MCF 10A (cell line): ENCODE measurements at regions of chr17 and their contacts with region 1.

Region 1: GRCh38 chr17:7435221-7435675 is at the start of gene TMEM102:
- DNase-seq: peak; percentile 99
- H3K4me3 Mint-ChIP-seq: peak within 1 kb of the TSS; percentile 81
- H3K27ac Mint-ChIP-seq: peak within 1 kb of the TSS; percentile 92
- H3K4me1 Mint-ChIP-seq: peaks cover 12% of the 10 kb centered on the region
- H3K27me3 Mint-ChIP-seq: no peaks in the 10 kb centered on the region
- CTCF ChIP-seq: no peak
- total RNA-seq, gene TMEM102: 6.1 and 6.3 TPM in 2 replicates

Region 2: GRCh38 chr17:7322520-7323194 is 112.6 kb before region 1 on chr17:
- CTCF ChIA-PET with region 1: no interaction called
- POLR2A ChIA-PET with region 1: no interaction called
- intact Hi-C with region 1: no loop called
- DNase-seq: no peak
- H3K4me3 Mint-ChIP-seq: no peak overlapping the region
- H3K27ac Mint-ChIP-seq: no peak overlapping the region
- H3K4me1 Mint-ChIP-seq: peaks cover 1% of the 10 kb centered on the region
- H3K27me3 Mint-ChIP-seq: no peaks in the 10 kb centered on the region
- CTCF ChIP-seq: no peak

Region 3: GRCh38 chr17:7361906-7362305 is 73.3 kb before region 1 on chr17:
- CTCF ChIA-PET with region 1: interaction called, 57 read pairs
- POLR2A ChIA-PET with region 1: interaction called, 8 read pairs
- intact Hi-C with region 1: no loop called
- DNase-seq: no peak
- H3K4me3 Mint-ChIP-seq: no peak overlapping the region
- H3K27ac Mint-ChIP-seq: no peak overlapping the region
- H3K4me1 Mint-ChIP-seq: peaks cover 7% of the 10 kb centered on the region
- H3K27me3 Mint-ChIP-seq: no peaks in the 10 kb centered on the region
- CTCF ChIP-seq: no peak

Region 4: DNA sequence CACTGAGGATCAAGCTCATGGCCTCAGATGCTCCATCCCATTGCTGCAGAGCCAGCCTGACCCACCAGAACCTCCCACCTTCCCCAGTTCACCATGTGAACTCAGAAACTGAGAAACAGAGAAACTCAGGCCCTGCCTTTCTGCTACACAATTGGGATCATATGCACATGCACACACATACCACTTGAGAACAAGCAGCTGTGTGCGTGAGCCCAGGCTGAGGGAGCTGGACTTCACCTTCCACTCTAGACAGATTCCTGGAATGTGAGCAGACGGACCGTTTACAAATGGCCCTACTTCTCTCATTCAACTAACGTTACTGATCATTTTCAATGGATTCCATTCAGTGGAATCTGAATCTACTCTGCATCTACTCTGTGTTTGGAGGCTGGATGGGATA is 11.6 kb before region 1 on chr17:
- CTCF ChIA-PET with region 1: interaction called, 16 read pairs
- POLR2A ChIA-PET with region 1: interaction called, 6 read pairs
- intact Hi-C with region 1: no loop called
- DNase-seq: no peak
- H3K4me3 Mint-ChIP-seq: no peak overlapping the region
- H3K27ac Mint-ChIP-seq: no peak overlapping the region
- H3K4me1 Mint-ChIP-seq: no peaks in the 10 kb centered on the region
- H3K27me3 Mint-ChIP-seq: no peaks in the 10 kb centered on the region
- CTCF ChIP-seq: no peak

Region 5: DNA sequence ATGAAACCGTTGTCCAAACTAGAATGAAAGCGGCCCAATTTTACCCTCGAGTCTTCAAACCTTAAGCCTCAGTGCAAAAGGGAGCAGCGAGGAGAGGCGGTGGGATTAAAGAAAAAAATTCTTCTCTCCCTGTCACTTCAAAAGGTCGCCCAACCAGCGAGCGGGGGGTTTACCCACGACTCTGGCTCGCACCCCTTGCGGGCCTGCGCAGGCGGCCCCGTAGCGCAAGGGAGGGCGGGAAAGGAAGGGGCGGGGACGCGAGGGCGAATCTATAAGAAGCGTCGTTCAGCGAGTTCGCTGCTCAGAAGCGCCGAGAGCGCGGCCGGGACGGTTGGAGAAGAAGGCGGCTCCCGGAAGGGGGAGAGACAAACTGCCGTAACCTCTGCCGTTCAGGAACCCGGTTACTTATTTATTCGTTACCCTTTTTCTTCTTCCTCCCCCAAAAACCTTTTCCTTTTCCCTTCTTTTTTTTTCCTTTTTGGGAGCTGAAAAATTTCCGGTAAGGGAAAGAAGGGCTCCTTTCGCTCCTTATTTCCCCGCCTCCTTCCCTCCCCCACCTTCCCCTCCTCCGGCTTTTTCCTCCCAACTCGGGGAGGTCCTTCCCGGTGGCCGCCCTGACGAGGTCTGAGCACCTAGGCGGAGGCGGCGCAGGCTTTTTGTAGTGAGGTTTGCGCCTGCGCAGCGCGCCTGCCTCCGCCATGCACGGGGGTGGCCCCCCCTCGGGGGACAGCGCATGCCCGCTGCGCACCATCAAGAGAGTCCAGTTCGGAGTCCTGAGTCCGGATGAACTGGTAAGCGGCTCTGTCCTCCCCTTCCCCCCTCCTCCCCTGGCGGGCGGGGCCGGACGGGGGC is 49.0 kb after region 1 on chr17 and contains the start of gene POLR2A:
- CTCF ChIA-PET with region 1: interaction called, 26 read pairs
- POLR2A ChIA-PET with region 1: interaction called, 115 read pairs
- intact Hi-C with region 1: loop called (anchors 1 kb)
- DNase-seq: peak; percentile 98
- H3K4me3 Mint-ChIP-seq: peak within 1 kb of the TSS; percentile 79
- H3K27ac Mint-ChIP-seq: peak within 1 kb of the TSS; percentile 100
- H3K4me1 Mint-ChIP-seq: peaks cover 43% of the 10 kb centered on the region
- H3K27me3 Mint-ChIP-seq: no peaks in the 10 kb centered on the region
- CTCF ChIP-seq: no peak
- total RNA-seq, gene POLR2A: 89.6 and 107 TPM in 2 replicates

Region 6: GRCh38 chr17:7538891-7539290 is 103.6 kb after region 1 on chr17:
- CTCF ChIA-PET with region 1: no interaction called
- POLR2A ChIA-PET with region 1: no interaction called
- intact Hi-C with region 1: no loop called
- DNase-seq: no peak
- H3K4me3 Mint-ChIP-seq: no peak overlapping the region
- H3K27ac Mint-ChIP-seq: no peak overlapping the region
- H3K4me1 Mint-ChIP-seq: no peaks in the 10 kb centered on the region
- H3K27me3 Mint-ChIP-seq: peaks cover 13% of the 10 kb centered on the region
- CTCF ChIP-seq: no peak

Region 7: GRCh38 chr17:7561028-7561575 is 125.9 kb after region 1 on chr17:
- CTCF ChIA-PET with region 1: interaction called, 34 read pairs
- POLR2A ChIA-PET with region 1: interaction called, 51 read pairs
- intact Hi-C with region 1: loop called (anchors 1 kb)
- DNase-seq: peak; percentile 92
- H3K4me3 Mint-ChIP-seq: peak overlapping the region; percentile 81
- H3K27ac Mint-ChIP-seq: peak overlapping the region; percentile 91
- H3K4me1 Mint-ChIP-seq: peaks cover 42% of the 10 kb centered on the region
- H3K27me3 Mint-ChIP-seq: no peaks in the 10 kb centered on the region
- CTCF ChIP-seq: peak; percentile 88